WTC11 (cell line): ENCODE measurements at regions of chr6 and their contacts with region 1.

Region 1: GRCh38 chr6:14066782-14067406 is 50.7 kb upstream of the CD83 start:
- DNase-seq: no peak
- ATAC-seq: peak; percentile 88
- H3K4me3 Mint-ChIP-seq: no peak overlapping the region
- H3K27ac Mint-ChIP-seq: no peak overlapping the region
- H3K4me1 Mint-ChIP-seq: no peaks in the 10 kb centered on the region
- H3K27me3 Mint-ChIP-seq: no peaks in the 10 kb centered on the region; the same call in 1 of the 2 replicates
- CTCF ChIP-seq: peak; percentile 37; the same call in 1 of the 2 replicates

Region 2: GRCh38 chr6:13924146-13924948 is 142.5 kb before region 1 on chr6:
- CTCF ChIA-PET with region 1: interaction called, 17 read pairs
- POLR2A ChIA-PET with region 1: no interaction called
- DNase-seq: peak; percentile 71
- ATAC-seq: peak; percentile 82
- H3K4me3 Mint-ChIP-seq: peak overlapping the region; percentile 86
- H3K27ac Mint-ChIP-seq: peak overlapping the region; percentile 53
- H3K4me1 Mint-ChIP-seq: peaks cover 43% of the 10 kb centered on the region
- H3K27me3 Mint-ChIP-seq: peaks cover 40% of the 10 kb centered on the region
- CTCF ChIP-seq: no peak

Region 3: DNA sequence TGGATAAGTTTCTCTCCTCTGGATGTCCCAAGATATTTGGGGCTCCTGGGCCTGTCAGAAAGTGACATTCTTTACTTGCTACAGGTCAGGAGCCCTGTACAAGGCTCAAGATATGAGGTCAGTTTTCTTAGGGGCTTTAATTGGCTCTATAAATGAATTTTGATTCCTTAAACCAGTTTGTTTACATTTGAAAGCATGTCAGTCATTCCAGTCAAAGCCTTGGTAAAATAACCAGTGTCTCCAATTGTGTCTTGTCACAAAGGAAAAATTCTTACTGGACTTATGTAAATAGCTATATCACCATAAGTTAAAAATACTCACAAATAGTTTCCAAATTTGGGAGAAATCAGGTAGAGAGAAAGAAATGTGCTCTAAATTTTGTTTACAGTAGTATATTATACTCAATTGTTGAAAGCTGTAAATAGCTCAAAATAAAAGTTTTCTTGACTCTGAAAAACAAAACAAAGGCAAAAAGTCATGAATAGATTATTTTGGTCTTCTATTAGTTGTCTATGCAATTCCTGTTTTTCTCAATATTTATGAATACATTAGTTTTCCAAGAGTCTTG is 119.2 kb before region 1 on chr6:
- CTCF ChIA-PET with region 1: no interaction called
- POLR2A ChIA-PET with region 1: no interaction called
- DNase-seq: no peak
- ATAC-seq: no peak
- H3K4me3 Mint-ChIP-seq: no peak overlapping the region
- H3K27ac Mint-ChIP-seq: no peak overlapping the region
- H3K4me1 Mint-ChIP-seq: peaks cover 21% of the 10 kb centered on the region
- H3K27me3 Mint-ChIP-seq: peaks cover 15% of the 10 kb centered on the region
- CTCF ChIP-seq: no peak

Region 4: GRCh38 chr6:13990796-13991195 is 76.1 kb before region 1 on chr6:
- CTCF ChIA-PET with region 1: interaction called, 3 read pairs
- POLR2A ChIA-PET with region 1: interaction called, 11 read pairs
- DNase-seq: no peak
- ATAC-seq: no peak
- H3K4me3 Mint-ChIP-seq: no peak overlapping the region
- H3K27ac Mint-ChIP-seq: no peak overlapping the region
- H3K4me1 Mint-ChIP-seq: peaks cover 12% of the 10 kb centered on the region
- H3K27me3 Mint-ChIP-seq: no peaks in the 10 kb centered on the region
- CTCF ChIP-seq: no peak

Region 5: DNA sequence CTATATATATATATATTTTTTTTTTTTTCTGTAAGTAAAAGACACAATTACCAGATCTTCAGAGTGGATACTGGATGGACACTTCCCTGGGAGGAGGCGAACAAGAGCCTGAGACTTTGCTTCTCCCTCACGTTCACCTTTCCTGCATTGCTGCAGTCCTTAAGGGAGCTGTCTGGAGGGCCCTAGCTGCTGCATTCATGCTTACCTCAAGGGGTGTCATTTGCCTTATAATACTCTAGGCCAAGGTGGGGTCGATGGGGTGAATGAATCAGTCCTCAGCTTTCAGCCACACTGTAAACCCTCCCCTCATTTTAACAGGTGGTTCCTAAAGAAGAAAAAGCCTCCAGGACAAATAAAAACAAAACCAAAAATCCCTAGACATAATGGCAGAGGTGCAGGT is 15.9 kb after region 1 on chr6:
- CTCF ChIA-PET with region 1: interaction called, 14 read pairs
- POLR2A ChIA-PET with region 1: no interaction called
- DNase-seq: no peak
- ATAC-seq: peak; percentile 95
- H3K4me3 Mint-ChIP-seq: no peak overlapping the region
- H3K27ac Mint-ChIP-seq: no peak overlapping the region
- H3K4me1 Mint-ChIP-seq: peaks cover 14% of the 10 kb centered on the region
- H3K27me3 Mint-ChIP-seq: no peaks in the 10 kb centered on the region; the same call in 1 of the 2 replicates
- CTCF ChIP-seq: no peak